ENCODE measurements at regions of chr6 and their contacts with region 1.

Region 1: DNA sequence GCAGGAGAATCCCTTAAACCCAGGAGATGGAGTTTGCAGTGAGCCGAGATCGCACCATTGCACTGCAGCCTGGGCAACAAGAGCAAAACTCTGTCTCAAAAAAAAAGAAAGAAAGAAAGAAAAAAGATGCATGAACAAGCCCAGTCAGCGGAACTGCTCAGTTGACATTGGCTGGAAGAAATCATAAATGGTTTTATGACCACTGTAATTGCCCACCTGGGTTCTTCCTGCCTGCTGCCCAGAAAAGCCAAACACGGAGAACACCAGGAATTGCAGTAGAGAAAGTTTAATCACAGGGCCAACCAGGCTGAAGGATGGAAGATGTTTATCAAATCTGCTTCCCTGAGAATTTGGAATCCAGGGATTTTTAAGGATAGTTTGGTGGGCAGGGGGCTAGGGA is 22.7 kb downstream of the BAK1 start:
- DNase-seq: no peak
- ATAC-seq: no peak
- H3K4me3 ChIP-seq: no peak overlapping the region
- H3K27ac ChIP-seq: peak overlapping the region; percentile 43; the same call in 1 of the 2 replicates
- H3K4me1 ChIP-seq: peaks cover 3% of the 10 kb centered on the region
- H3K27me3 ChIP-seq: no peaks in the 10 kb centered on the region
- CTCF ChIP-seq: no peak
- EP300 ChIP-seq: no peak
- POLR2A ChIP-seq: no peak
- RAD21 ChIP-seq: no peak

Region 2: DNA sequence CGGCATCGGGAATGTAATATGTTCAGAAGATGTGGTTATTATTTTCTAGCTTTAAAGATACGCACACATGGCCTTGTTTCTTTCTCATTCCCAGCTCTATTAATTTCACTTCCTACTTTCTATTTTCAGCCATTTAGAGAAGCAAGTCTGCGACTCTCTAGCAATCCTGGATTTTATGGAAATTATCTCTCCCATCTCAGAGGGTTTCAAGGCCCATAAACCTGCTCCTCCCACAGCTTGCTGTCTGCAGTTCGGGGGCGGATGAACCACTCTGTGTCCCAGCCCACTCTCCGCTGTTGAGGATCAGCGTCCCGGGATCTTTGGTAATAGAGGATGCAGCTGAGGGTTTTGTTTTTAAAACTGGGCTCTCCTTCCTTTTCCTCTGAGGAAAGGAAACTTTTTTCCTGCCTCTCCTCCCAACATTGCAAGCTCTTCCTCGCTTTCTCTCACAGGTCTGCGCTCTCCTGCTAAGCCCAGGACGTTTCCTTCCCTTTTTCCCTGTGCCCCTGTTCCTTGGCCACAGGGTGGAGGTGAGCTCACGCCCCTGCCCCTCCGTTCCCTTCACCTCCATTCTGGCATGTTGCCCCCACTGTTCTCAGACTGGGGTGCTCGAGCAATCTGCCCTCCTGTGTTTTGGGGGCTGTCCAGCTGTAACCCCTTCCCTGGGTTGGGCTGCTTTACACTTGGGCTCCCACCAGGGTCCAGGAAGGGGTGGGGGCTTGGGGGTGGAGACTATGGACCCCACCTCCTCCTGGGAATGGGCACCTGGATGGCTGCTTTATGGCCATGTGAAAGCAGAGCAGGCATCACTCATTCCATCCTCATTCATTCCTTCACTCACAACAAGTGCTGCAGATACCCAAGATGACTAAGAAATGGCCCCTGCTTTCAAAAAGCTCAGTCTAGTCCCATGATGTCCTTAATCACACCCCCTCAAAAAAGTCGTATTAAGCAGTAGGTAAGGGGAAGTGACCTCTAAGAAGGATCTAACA is 48.1 kb before region 1 on chr6:
- CTCF ChIA-PET with region 1: no interaction called
- POLR2A ChIA-PET with region 1: no interaction called
- RAD21 ChIA-PET with region 1: no interaction called
- SMC1A ChIA-PET with region 1: no interaction called
- in situ Hi-C with region 1: no loop called
- intact Hi-C with region 1: loop called (anchors 5 kb)
- DNase-seq: no peak
- ATAC-seq: peak; percentile 47
- H3K4me3 ChIP-seq: 0 out of 2 replicates have a peak overlapping the region, but pooled peaks have one; percentile 12
- H3K27ac ChIP-seq: peak overlapping the region; percentile 38
- H3K4me1 ChIP-seq: peaks cover 16% of the 10 kb centered on the region
- H3K27me3 ChIP-seq: no peaks in the 10 kb centered on the region
- CTCF ChIP-seq: no peak
- EP300 ChIP-seq: no peak
- POLR2A ChIP-seq: no peak
- RAD21 ChIP-seq: no peak

Region 3: DNA sequence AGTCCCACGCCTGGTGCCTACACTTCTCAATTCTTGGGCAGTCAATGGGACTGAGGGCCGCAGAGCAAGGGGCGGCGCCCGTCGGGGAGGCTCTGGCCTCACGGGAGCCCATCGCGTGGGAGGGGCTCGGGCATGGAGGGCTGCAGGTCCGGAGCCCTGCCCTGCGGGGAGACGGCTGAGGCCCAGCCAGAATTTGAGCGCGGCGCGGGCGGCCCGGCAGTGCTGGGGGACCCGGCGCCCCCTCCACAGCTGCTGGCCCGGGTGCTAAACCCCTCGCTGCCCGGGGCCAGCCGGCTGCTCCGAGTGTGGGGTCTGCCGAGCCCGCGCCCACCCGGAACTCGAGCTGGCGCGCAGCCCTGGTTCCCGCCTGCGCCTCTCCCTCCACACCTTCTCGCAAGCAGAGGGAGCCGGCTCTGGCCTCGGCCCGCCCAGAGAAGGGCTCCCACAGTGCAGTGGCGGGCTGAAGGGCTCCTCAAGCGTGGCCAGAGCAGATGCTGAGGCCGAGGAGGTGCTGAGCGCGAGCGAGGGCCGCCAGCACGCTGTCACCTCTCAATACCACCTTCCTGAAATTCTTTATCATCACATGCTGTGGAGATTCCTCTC is 35.8 kb before region 1 on chr6:
- CTCF ChIA-PET with region 1: no interaction called
- POLR2A ChIA-PET with region 1: no interaction called
- RAD21 ChIA-PET with region 1: no interaction called
- SMC1A ChIA-PET with region 1: no interaction called
- in situ Hi-C with region 1: no loop called
- intact Hi-C with region 1: no loop called
- DNase-seq: no peak
- ATAC-seq: no peak
- H3K4me3 ChIP-seq: no peak overlapping the region
- H3K27ac ChIP-seq: no peak overlapping the region
- H3K4me1 ChIP-seq: no peaks in the 10 kb centered on the region
- H3K27me3 ChIP-seq: no peaks in the 10 kb centered on the region
- CTCF ChIP-seq: no peak
- EP300 ChIP-seq: no peak
- POLR2A ChIP-seq: no peak
- RAD21 ChIP-seq: no peak

Region 4: GRCh38 chr6:33535104-33535603 is 22.2 kb before region 1 on chr6:
- CTCF ChIA-PET with region 1: interaction called, 3 read pairs
- POLR2A ChIA-PET with region 1: interaction called, 13 read pairs
- RAD21 ChIA-PET with region 1: no interaction called
- SMC1A ChIA-PET with region 1: no interaction called
- in situ Hi-C with region 1: no loop called
- intact Hi-C with region 1: no loop called
- DNase-seq: no peak
- ATAC-seq: no peak
- H3K4me3 ChIP-seq: no peak overlapping the region
- H3K27ac ChIP-seq: no peak overlapping the region
- H3K4me1 ChIP-seq: no peaks in the 10 kb centered on the region
- H3K27me3 ChIP-seq: no peaks in the 10 kb centered on the region
- CTCF ChIP-seq: peak in 1 of 3 experiments; percentile 11; a peak in 1 of 6 replicates
- EP300 ChIP-seq: no peak
- POLR2A ChIP-seq: no peak
- RAD21 ChIP-seq: no peak